ENCODE measurements at regions of chr3 and their contacts with region 1.

Region 1: DNA sequence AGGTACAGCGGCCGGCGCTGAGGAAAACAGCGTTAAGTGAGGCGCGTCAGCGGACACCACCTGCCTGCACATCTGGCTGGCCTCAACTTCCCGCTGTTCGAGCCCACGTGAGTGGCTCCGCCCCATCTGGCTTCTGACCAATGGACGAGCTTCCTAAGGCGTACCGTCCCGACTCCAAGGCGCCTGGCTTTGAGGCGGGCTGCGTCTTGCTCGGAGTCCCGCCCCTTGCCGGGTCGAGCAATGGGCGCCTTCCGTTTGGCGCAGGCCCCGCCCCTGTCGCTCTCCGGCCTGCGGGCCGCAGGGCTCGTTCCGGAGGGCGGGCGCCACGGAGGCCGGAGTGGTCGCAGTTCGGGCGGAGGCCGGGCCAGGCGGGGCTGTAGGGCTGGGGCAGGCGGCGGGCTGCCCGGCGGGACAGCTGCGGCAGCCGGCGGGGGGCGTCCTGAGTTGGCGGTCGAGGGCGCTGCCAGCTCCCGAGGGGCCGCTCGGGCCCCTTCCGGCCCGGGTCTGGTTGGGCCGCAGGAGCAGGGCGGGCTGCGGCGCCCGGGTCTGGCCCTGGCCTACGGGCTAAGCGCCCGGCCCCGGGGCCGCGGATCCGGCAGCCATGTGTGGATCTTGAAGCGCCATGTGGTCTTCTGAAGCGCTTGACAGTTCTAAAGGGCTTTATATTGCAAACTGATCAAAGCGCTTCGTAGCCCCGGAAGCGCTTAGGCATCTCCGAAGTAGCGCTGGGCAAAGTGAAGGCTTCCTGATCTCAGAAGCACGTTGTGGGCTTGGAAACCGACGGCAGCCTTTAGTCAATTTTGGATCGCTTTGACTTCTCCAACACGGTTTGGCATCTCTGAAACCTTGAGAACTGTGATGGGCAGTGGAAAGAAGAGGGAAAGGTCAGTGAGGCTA is at the start of gene TATDN2:
- DNase-seq: peak; percentile 78
- H3K4me3 ChIP-seq: peak within 1 kb of the TSS; percentile 59
- H3K27me3 ChIP-seq: no peaks in the 10 kb centered on the region
- CTCF ChIP-seq: no peak
- polyA plus RNA-seq, gene TATDN2: 14.9 and 15.3 TPM in 2 replicates

Region 2: DNA sequence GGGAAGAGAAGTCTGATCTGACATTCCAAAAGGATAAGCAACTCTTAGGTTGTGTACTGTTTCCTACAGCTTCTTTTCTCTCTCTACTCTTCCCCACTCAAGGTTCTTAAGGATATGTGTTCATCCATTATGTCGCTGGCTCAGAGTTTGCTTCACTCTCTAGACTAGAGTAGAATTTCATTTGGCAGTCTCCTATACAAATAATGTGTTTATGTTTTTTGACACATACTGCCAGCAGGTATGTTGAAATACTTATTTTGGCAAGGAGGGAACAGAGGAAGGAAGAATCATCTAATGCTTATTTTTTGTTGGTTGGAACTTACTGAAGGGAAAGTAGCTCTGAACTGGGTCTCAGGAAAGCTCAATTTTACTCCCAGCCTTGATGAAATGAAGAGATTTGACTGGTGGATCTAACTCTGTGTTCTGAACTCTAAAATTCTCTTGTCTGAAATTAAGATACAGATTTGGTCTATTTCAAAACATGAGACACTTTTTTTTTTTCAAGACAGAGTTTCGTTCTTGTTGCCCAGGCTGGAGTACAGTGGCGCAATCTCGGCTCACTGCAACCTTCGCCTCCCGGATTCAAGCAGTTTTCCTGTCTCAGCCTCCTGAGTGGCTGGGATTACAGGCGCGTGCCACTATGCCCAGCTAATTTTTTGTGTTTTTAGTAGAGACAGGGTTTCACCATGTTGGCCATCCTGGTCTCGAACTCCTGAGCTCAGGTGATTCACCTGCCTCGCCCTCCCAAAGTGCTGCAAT is 254.2 kb before region 1 on chr3:
- CTCF ChIA-PET with region 1: no interaction called
- POLR2A ChIA-PET with region 1: interaction called, 15 read pairs
- DNase-seq: no peak
- H3K4me3 ChIP-seq: no peak overlapping the region
- H3K27me3 ChIP-seq: no peaks in the 10 kb centered on the region
- CTCF ChIP-seq: no peak